Common myeloid progenitor, CD34-positive (primary cell): ENCODE measurements at regions of chr3 and their contacts with region 1.

Region 1: GRCh38 chr3:141441381-141442364 is 45.2 kb upstream of the RASA2 start:
- DNase-seq: peak; percentile 79 to 89 (median 88)
- H3K4me3 ChIP-seq: peak overlapping the region in 1 of 7 experiments; percentile 35
- H3K27ac ChIP-seq: peak overlapping the region in 1 of 2 experiments; percentile 62
- H3K4me1 ChIP-seq: peaks cover 0 to 4% (median 2%) of the 10 kb centered on the region in 4 experiments
- H3K27me3 ChIP-seq: no peaks in the 10 kb centered on the region

Region 2: GRCh38 chr3:141303481-141304223 is 138.0 kb before region 1 on chr3:
- CTCF ChIA-PET with region 1: interaction called, 21 read pairs
- POLR2A ChIA-PET with region 1: no interaction called
- DNase-seq: peak; percentile 83 to 91 (median 87)
- H3K4me3 ChIP-seq: peak overlapping the region in 1 of 7 experiments; percentile 20
- H3K27ac ChIP-seq: no peak overlapping the region
- H3K4me1 ChIP-seq: peaks cover 0 to 5% (median 4%) of the 10 kb centered on the region in 4 experiments
- H3K27me3 ChIP-seq: no peaks in the 10 kb centered on the region

Region 3: DNA sequence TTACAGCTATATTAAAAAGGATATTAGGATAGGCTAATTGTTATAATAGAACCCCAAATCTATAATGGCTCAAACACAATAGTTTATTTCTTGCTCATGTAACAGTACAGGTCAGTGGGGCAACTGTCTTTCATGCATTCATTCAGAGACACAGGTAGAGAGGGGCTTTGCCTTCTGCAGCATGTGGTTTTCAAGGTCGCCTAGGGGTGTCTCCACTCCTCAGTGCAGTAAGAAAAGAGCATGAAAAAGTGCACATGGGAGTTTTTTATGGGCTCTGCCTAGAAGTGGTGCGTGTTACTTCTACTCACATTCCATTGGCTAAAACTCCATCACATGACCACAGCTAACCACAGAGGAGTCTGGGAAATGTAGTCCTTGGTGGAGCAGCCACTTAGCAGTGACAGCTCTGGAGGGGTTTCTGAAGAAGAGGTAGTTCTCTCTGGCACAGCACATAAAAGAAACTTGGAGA is 71.6 kb before region 1 on chr3:
- CTCF ChIA-PET with region 1: interaction called, 18 read pairs
- POLR2A ChIA-PET with region 1: no interaction called
- DNase-seq: peak; percentile 93 to 96 (median 96)
- H3K4me3 ChIP-seq: no peak overlapping the region
- H3K27ac ChIP-seq: peak overlapping the region in 1 of 2 experiments; percentile 64
- H3K4me1 ChIP-seq: peaks cover 0 to 18% (median 8%) of the 10 kb centered on the region in 4 experiments
- H3K27me3 ChIP-seq: no peaks in the 10 kb centered on the region

Region 4: DNA sequence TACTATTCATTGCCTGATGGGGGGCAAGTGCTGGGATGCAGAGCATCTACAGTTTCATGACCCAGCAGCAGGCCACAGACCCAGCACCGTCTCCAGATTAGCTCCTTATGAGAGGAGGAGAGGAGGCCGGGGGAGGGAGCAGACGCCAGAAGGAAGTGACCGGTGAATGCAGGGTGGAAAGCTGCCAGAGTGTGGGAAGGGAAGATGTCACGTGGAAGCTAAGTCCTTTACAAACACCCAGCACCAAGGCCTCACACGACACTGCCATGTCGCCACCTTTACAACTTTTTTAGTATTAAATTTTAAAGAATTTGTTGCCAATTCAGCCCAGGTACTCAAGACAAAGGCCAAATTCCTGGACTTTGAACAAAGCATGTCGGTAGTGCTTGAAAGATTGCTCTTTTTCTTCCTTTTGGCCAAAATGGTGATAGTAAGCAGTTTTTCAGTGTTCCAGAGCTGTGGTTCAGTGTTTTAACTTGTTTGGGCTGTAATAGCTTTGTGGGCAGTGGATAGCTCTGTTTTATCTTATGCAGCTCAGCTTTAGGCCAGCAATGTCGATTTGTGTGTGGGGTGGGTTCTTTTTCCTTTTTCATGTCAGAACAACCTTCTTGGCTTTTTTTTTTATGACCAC is 15.2 kb before region 1 on chr3:
- CTCF ChIA-PET with region 1: interaction called, 37 read pairs
- POLR2A ChIA-PET with region 1: interaction called, 3 read pairs
- DNase-seq: peak; percentile 42 to 62 (median 58)
- H3K4me3 ChIP-seq: peak overlapping the region in 2 of 7 experiments; percentile 22 to 29
- H3K27ac ChIP-seq: peak overlapping the region in 1 of 2 experiments; percentile 50
- H3K4me1 ChIP-seq: peaks cover 2 to 20% (median 9%) of the 10 kb centered on the region in 4 experiments
- H3K27me3 ChIP-seq: no peaks in the 10 kb centered on the region